Activated CD4-positive, alpha-beta T cell treated with anti-CD3 and anti-CD28 coated beads for 36 hours (primary cell): ENCODE measurements at regions of chr14 and their contacts with region 1.

Region 1: DNA sequence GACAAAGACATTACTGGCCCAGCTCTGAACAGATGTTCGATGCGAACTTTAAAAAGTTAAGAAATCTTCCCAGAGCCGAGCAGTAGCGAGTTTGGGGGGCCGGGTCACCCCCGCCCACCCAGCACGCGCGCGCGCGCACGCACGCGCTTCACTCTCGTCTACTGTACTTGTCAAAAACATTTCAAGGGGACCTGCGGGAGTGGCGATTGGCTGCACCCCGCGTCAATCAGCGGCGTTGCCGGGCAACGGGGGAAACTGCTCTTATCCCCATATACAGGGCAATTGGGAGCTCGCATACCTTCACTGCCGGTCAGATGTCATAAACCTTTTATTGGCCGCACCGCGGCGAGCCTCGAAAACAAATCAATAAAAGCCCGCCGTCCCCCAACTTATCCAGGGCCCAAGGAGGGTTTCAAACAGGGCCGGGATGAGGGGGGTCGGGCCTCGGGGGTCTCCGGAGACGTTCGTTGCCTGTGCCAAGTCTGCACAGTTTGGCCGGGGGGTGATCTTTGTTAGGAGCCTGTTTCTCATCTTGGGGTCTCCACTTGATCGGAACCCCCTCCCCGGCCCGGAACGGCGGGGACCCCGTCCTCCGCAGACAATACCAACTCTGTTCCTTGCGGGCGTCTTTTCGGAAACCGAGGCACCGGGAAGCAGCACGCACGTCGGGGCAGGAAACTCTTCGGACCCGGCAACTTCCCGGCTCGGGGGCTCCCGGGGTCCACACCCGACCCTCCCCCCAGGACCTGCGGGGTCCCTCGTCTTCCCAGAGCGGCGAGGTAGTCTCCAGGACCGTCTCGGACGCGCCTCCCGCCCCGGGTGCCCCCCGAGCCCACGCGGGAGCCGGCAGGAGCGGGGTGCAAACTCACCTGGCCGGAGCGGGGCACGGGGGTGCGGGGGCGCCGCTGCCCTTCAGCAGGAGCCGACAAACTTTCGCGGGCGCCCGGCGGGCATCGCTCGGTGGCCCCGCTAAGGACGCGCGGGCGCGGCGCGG is 734 bp downstream of the FOXN3 start:
- DNase-seq: peak; percentile 98
- ATAC-seq: peak; percentile 80
- H3K4me3 Mint-ChIP-seq: peak overlapping the region; percentile 84
- H3K27ac Mint-ChIP-seq: peak overlapping the region; percentile 85
- H3K4me1 Mint-ChIP-seq: peaks cover 51% of the 10 kb centered on the region
- H3K27me3 Mint-ChIP-seq: no peaks in the 10 kb centered on the region

Region 2: GRCh38 chr14:89228921-89229639 is 187.2 kb before region 1 on chr14:
- CTCF ChIA-PET with region 1: no interaction called
- POLR2A ChIA-PET with region 1: no interaction called
- intact Hi-C with region 1: no loop called
- DNase-seq: no peak
- ATAC-seq: no peak
- H3K4me3 Mint-ChIP-seq: no peak overlapping the region
- H3K27ac Mint-ChIP-seq: peak overlapping the region; percentile 1
- H3K4me1 Mint-ChIP-seq: peaks cover 55% of the 10 kb centered on the region
- H3K27me3 Mint-ChIP-seq: no peaks in the 10 kb centered on the region

Region 3: DNA sequence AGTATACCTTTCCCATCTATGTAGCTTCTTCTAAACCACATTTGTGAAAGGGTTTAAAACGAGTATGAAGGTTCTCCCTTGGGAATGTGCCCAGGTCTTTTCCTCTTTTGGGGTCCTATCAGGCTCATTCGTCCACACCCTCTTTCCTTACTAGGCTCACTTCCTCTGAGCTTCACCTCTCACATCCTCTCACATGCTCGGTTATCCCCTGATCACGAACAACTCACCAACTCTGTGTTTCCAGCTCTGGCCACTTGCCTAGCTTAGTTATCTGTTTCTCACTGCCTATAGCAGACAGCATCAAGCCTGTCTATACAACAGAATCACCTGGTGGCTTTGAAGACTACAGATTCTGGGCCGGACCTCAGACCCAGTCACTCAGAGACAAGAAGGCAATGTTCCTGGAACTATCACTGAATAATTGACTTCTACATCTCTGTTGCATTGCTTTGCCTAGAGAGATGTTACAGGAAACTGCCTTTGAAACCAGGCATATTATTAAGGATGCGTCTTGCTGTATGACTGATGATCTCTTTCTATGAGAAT is 157.5 kb before region 1 on chr14:
- CTCF ChIA-PET with region 1: no interaction called
- POLR2A ChIA-PET with region 1: no interaction called
- intact Hi-C with region 1: no loop called
- DNase-seq: peak; percentile 7
- ATAC-seq: peak; percentile 33
- H3K4me3 Mint-ChIP-seq: no peak overlapping the region
- H3K27ac Mint-ChIP-seq: peak overlapping the region; percentile 26
- H3K4me1 Mint-ChIP-seq: peaks cover 19% of the 10 kb centered on the region
- H3K27me3 Mint-ChIP-seq: no peaks in the 10 kb centered on the region

Region 4: DNA sequence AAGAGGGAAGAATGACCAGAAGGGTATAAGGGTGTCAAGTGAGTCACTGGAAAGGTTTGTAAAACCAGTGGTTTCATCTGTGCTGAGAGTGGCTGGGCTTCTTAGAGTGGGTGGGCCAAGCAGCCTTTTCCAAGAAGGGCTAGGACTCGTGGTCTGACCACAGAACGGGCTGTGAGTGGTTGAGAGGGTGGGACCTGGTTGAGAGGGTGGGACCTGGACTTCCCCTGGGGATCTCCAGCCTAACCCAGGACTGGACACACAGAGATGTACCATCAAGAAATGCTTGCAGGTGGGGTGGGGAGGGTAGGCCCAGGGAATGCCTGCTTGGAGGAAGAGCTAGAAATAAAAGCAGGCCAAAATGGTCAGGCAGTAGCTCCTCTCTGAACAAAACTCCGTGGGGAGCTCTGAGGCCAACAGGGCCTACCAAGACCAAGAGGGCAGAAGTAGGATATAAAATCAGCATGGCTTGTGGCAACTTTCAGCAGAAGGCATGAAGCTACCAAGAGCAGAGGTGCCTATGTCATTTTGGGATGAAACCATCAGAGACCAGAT is 139.8 kb before region 1 on chr14:
- CTCF ChIA-PET with region 1: no interaction called
- POLR2A ChIA-PET with region 1: no interaction called
- intact Hi-C with region 1: loop called in 1 of 2 experiments (anchors 5 kb)
- DNase-seq: peak; percentile 87
- ATAC-seq: peak; percentile 91
- H3K4me3 Mint-ChIP-seq: peak overlapping the region; percentile 3
- H3K27ac Mint-ChIP-seq: peak overlapping the region; percentile 90
- H3K4me1 Mint-ChIP-seq: peaks cover 69% of the 10 kb centered on the region
- H3K27me3 Mint-ChIP-seq: no peaks in the 10 kb centered on the region

Region 5: DNA sequence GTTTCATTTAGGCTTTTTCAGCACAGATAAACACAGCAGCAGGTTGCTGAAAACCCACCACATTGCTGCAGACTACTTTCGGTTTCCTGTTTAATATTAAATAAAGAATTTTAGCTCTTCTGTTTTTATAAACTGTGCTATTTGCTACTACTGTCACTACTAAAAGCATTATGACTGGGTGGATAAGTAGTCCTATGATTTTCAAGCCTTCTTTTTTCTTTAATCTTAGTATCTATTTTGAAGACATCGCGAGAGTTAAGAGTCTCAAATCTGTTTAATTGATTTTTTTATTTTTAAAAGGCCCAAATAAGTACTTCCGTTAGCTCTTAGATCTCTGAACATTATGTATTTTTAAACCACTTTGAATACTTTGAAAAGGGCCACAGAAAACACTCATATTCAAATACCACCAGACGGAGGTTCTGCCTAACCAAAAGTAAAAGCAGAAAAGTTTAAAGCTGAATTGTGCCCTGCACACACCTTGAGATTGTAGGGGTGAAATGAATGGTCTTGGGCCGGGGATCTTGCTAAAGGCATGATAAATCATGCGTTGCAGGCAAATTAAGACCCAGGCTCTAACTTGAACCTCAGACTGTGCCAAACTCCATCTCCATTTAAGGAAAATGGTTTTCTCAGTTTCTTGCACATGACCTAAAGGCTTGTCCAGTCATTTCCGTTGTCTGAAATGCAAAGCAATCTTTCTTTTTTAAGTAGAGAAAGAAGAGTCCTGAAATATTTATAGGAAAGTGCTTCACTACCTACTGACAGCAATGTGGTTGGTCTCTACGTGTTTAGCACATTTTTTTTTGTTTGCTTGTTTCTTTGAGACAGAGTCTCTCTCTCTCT is 14.3 kb after region 1 on chr14:
- CTCF ChIA-PET with region 1: interaction called, 3 read pairs
- POLR2A ChIA-PET with region 1: interaction called, 8 read pairs
- intact Hi-C with region 1: loop called (anchors 1 to 2 kb)
- DNase-seq: peak; percentile 75
- ATAC-seq: peak; percentile 89
- H3K4me3 Mint-ChIP-seq: peak overlapping the region; percentile 71
- H3K27ac Mint-ChIP-seq: peak overlapping the region; percentile 94
- H3K4me1 Mint-ChIP-seq: peaks cover 70% of the 10 kb centered on the region
- H3K27me3 Mint-ChIP-seq: no peaks in the 10 kb centered on the region

Region 6: DNA sequence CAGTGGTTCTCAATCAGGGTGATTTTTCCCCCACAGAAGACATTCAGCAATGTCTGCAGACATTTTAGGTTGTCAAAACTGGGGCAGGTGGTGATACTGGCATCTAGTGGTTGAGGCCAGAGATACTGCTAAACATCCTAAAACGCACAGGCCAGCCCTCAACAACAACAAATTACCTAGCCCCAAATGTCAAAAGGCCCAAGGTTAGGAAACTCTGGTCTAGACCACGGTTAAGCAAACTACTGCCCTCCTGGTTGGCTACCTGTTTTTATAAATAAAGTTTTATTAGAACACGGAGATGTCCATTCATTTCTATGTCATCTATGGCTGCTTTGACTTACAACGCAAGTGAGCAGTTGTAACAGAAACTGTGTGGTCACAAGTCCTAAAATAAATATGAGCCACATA is 351.6 kb after region 1 on chr14:
- CTCF ChIA-PET with region 1: no interaction called
- POLR2A ChIA-PET with region 1: no interaction called
- intact Hi-C with region 1: loop called (anchors 2 to 5 kb)
- DNase-seq: peak; percentile 78
- ATAC-seq: peak; percentile 95
- H3K4me3 Mint-ChIP-seq: peak overlapping the region; percentile 13
- H3K27ac Mint-ChIP-seq: peak overlapping the region; percentile 82
- H3K4me1 Mint-ChIP-seq: peaks cover 25% of the 10 kb centered on the region
- H3K27me3 Mint-ChIP-seq: peaks cover 2% of the 10 kb centered on the region

Region 7: DNA sequence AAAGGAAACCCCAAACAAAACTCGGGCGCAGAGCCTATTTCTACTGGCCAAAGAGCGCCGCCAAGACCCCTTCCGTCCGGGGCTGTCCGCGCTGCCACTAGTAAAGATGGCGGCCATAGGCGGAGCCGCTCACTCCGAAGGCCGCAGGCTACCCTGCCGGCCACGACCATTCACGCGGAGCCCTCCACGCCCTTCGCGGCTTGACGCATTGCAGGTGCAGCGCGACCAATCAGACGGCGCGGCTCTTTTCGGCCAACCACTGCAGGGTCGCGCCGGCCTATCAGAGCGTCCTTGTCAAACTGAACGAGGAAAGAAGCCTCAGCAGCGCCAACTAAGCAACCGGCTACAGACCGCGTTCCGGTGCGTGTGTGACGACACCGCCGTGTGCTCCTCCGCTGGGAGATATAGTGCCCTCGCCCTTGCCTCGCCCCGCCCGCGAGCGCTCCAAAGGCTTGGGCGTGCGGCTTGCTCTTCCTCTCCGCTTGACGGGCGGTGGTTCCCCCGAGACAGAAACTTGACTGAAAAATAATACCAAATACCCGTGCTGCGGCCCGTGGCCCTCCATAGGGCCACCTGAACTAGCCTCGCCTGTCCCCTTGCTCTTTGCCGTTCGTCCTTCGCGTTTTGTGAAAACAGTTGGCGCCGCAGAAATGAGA is 966.9 kb after region 1 on chr14:
- CTCF ChIA-PET with region 1: no interaction called
- POLR2A ChIA-PET with region 1: no interaction called
- intact Hi-C with region 1: loop called in 1 of 2 experiments (anchors 5 kb)
- DNase-seq: peak; percentile 99
- ATAC-seq: peak; percentile 89
- H3K4me3 Mint-ChIP-seq: no peak overlapping the region
- H3K27ac Mint-ChIP-seq: no peak overlapping the region
- H3K4me1 Mint-ChIP-seq: peaks cover 27% of the 10 kb centered on the region
- H3K27me3 Mint-ChIP-seq: no peaks in the 10 kb centered on the region